ENCODE measurements at regions of chr14 and their contacts with region 1.

Region 1: DNA sequence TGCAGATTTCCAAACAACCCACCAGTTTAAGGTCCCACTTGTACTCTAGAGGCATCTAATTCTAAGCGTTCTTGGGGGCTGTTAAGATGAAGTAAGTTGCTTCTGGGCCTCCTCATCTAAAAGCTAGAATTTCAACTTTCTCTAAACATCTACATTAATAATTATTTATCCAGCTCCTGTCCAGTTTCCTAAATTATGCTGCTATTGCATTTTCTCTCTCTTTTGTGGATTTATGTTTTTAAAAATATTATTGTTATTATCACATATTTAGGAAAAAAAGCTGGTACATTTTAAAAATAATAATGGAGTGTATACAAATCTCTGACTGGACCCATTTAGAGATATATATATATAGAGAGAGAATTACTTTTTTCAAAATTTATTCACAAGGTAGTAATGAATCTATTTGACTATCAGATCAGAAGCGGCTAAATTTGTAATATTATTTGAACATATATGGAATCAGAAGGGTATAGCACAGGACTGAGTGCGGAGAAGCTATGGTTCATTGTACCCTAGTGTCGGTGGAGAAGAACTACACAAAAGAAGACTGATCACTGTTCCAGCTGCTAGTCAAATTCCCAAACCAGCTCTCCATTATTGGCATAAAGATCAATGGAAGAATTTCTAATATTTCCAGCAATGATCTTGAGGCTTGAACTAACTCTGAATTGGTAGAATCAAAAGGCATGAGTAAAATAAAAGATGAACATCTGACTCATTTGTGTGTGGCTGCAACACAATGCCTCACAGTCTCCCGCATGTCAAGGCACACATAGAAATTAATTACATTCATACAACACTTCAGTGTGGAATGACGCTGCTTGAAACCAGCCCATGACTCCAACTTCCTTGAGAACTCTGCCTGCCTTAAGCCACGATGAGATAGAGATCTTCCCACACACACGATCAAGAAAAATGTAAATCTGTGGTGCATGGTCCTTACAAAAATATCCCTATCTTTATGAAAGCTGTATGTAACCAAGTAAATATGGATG is 433.4 kb upstream of the OR4E1 start:
- DNase-seq: peak; percentile 29
- ATAC-seq: no peak
- H3K4me3 ChIP-seq: no peak overlapping the region
- H3K27ac ChIP-seq: no peak overlapping the region
- H3K4me1 ChIP-seq: no peaks in the 10 kb centered on the region
- H3K27me3 ChIP-seq: peaks cover 3% of the 10 kb centered on the region
- CTCF ChIP-seq: no peak
- POLR2A ChIP-seq: no peak
- RAD21 ChIP-seq: no peak

Region 2: DNA sequence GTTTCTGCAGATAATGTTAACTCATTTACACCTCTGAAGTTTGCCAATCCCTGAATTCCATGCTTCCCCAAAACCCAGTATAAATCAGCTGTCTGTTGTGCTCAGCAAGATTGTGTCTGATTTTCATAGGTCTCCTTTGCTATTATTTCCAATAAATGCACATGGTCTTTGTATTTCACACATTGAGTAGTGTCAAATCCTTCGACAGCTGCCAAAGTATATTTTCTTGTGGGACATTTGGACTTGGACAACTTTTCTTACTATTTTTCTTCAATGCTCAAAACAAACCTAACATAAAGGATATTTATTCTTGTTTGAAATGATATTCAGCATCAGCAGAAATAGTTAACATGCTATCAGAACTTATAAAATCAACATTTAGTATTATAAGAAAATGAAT is 27.2 kb before region 1 on chr14:
- CTCF ChIA-PET with region 1: interaction called, 5 read pairs
- POLR2A ChIA-PET with region 1: no interaction called
- dilution Hi-C with region 1: no loop called
- in situ Hi-C with region 1: no loop called
- intact Hi-C with region 1: loop called (anchors 1 kb)
- DNase-seq: no peak
- ATAC-seq: no peak
- H3K4me3 ChIP-seq: no peak overlapping the region
- H3K27ac ChIP-seq: no peak overlapping the region
- H3K4me1 ChIP-seq: no peaks in the 10 kb centered on the region
- H3K27me3 ChIP-seq: no peaks in the 10 kb centered on the region; the same call in none of the 2 replicates
- CTCF ChIP-seq: no peak
- POLR2A ChIP-seq: no peak
- RAD21 ChIP-seq: no peak

Measured in IMR-90 (cell line).